ENCODE measurements at regions of chr4 and their contacts with region 1.

Region 1: DNA sequence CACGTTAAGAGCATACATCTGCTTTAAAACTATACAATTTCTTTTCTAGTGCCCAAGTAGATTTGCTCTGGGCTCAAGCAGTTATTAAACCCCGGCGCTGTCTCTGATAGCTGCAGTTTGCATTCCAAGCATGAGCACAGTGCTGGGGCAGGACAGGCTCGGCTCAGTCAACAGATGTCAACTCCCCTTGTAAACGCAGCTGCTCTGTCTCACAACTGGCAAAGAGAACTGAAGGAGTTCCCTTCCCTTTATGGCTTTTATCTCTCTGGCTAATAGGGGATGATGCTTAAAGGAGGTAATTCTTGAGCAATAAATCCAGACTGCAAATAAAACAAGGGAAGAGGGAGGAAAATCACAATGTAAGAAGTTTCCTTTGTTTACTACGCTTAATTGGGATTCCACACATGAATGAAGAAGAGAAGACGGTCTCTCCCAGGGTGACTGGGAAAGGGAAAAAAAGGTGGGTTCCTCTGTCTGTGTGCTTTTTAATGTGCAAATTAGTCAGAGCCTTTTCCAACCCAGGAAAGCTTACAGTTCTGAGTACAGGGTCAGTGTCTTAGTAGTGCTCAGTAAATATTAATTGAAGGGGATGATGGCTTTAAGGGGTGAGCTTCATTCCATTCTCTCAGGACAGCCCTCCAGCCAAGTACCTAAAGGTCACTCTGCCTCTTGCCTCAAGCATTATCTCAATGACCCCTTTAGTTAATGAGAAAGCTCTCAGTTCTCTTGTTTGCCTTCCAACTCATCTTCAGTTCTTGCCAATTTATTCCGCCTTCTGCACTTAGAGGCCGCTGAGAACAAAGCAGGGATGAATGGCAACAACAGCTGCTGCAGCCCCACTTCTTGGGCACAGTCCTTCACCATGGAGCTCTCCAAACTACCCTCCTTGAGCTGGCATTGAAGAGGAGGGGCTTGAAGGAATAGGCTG is 155.7 kb upstream of the JADE1 start:
- DNase-seq: peak; percentile 80
- ATAC-seq: peak; percentile 95

Region 2: GRCh38 chr4:128574706-128575105 is 79.1 kb before region 1 on chr4:
- intact Hi-C with region 1: loop called (anchors 5 kb)
- DNase-seq: no peak
- ATAC-seq: peak; percentile 34

Region 3: DNA sequence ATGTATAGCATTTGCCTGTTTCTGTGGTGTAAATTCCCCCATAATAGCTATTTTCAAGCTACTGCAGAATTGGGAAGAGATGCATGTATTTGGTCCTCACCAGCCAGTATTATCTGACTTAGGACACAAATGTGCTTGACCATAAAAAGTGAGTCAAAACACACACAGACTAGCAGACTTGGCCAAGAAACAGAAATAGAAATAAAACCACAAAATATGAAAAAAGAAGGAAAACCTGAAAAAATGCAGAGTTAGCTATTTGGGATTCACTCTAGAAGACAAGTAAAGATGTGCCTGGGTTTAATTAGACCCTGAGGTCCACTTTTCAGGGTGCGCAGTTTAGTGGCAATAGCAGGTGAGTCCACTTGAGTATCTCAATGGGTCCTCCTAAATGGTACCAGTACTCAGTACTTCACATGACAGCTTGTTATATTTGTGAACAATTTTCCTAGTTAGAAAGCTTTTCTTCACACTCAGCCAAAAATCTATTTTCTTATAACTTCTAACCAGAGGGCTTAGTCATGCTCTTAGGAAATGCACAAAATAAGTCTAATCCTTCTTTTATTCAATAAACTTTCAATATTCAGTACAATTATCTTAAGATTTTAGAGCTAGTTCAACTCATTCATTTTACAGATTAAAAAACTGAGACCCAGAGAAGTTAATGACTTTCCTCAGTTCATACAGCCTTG is 47.0 kb after region 1 on chr4:
- intact Hi-C with region 1: no loop called
- DNase-seq: no peak
- ATAC-seq: no peak

Measured in Right ventricle myocardium inferior (tissue), 1 donor.